HepG2 (cell line): ENCODE measurements at regions of chr13 and their contacts with region 1.

Region 1: DNA sequence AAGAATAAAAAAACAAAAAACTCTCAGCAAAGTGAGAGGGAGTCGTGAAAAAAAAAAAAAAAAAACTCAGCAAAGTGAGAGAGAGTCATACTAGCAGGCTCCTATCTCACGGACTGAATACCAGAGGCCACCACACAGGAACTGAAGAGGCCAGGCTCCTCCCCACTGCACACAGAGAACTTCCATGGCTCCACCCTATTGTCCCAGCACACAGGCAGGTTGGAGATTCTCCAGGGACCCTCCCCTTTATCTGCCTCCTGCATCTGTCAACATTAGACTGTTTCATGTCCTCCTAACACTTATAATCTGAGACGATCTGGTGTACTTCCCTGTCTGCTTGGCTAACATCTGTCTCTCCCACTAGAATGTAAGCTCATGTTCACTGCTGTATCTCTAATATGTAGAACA is 37.0 kb upstream of the FARP1 start:
- DNase-seq: peak; percentile 90
- ATAC-seq: peak; percentile 99
- H3K4me3 ChIP-seq: peak overlapping the region in 1 of 3 experiments; percentile 9; a peak in 2 of 6 replicates
- H3K27ac ChIP-seq: peak overlapping the region; percentile 33
- H3K4me1 ChIP-seq: peaks cover 71% of the 10 kb centered on the region
- H3K27me3 ChIP-seq: no peaks in the 10 kb centered on the region
- CTCF ChIP-seq: no peak
- EP300 ChIP-seq: peak in 1 of 2 experiments; percentile 39; a peak in 1 of 4 replicates
- POLR2A ChIP-seq: peak in 1 of 2 experiments; percentile 55; a peak in 2 of 4 replicates
- RAD21 ChIP-seq: no peak

Region 2: GRCh38 chr13:98033277-98034247 is 72.4 kb before region 1 on chr13:
- CTCF ChIA-PET with region 1: no interaction called
- POLR2A ChIA-PET with region 1: no interaction called
- in situ Hi-C with region 1: no loop called
- intact Hi-C with region 1: loop called (anchors 5 kb)
- DNase-seq: peak; percentile 85
- ATAC-seq: peak; percentile 95
- H3K4me3 ChIP-seq: peak overlapping the region; percentile 43 to 60 (median 48)
- H3K27ac ChIP-seq: peak overlapping the region; percentile 63
- H3K4me1 ChIP-seq: peaks cover 72% of the 10 kb centered on the region
- H3K27me3 ChIP-seq: no peaks in the 10 kb centered on the region
- CTCF ChIP-seq: 0 out of 2 replicates have a peak, but pooled peaks have one; percentile 11
- EP300 ChIP-seq: 0 out of 4 replicates have a peak, but pooled peaks of 1 of the 2 experiments have one; percentile 14
- POLR2A ChIP-seq: peak in 1 of 2 experiments; percentile 49; a peak in 1 of 4 replicates
- RAD21 ChIP-seq: no peak; the same call in 1 of the 2 replicates